ENCODE measurements at regions of chr18 and their contacts with region 1.

Region 1: DNA sequence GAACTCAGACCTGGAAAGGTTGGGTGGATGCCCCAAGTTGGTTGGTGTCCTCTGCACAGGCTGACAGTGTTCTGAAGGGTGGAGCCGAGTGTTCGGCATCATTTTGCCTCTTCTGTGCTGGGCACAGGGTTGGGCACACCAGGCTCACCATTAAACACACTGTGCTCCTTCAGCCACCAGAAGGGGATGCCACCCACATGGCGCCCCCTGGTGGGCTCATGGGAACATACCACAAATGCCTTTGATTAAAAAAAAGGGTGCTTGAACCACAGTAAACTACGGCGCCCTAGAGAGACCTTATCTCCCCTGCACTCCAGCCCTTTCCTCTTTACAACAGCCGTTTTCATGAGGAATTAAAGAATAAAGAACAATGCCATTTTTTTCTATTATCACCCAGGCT is 89.4 kb downstream of the CELF4 start:
- DNase-seq: no peak

Region 2: DNA sequence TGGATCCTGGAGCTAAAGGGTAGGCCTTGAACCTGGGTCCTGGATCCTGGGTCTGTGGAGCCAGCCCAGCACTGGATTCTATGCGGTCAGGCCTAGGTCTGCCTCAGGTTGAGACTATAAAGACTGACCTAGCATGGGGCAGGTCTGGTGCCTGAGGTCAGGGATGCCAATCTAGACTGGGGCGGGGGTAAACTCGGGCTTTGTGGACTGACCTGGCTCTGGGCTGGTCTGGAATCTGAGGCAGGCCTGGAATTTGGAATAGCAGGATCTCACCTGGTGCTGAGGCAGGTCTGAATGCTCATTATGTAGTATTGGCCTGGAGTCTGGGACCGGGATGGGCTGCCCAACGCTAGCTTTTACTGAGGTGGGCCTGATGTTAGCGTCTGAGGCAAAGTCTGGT is 391.3 kb before region 1 on chr18:
- intact Hi-C with region 1: no loop called
- DNase-seq: no peak

Region 3: DNA sequence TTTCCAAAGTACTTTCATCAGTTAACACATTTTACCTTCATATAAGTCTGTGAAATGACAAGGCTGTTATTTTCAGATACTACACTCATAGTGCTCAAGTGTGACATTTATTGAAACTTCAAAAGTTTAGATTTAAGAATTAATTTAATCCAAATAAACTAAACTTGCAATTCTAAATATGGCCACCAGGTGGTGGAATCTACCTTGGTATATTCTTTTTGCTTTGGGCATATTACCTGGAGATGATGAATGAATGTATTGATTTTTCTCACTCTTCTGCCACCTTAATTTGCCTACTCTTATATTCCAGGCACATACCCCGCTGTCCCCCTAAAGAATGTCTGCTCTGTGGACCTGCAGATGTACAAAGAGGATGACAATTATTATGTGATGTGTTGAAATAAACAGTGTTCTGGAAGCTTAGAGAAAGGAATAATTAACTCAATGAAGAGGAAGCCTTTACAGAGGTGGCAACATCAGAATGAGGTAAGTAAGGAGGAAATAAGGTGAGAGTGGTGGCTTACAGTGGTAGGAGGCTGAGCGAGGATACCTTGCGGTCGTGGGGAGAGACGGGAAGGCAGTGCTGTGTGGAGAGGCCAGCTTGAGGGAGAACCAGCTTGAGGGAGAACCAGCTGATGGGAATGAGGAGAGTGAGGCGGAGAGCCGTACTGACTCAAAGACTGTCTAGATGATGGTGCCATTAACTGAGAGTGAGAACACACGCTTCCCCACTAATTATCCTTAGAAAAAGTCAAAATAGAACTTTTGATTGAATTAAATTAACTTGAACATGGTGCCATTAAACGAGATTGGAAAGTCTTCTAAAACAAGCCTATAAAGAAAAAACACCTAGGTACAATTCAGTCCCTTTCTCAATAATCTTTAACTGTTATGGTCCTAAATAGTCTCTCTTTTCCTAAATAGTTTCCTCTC is 90.1 kb before region 1 on chr18:
- intact Hi-C with region 1: loop called (anchors 5 kb)
- DNase-seq: no peak

Region 4: DNA sequence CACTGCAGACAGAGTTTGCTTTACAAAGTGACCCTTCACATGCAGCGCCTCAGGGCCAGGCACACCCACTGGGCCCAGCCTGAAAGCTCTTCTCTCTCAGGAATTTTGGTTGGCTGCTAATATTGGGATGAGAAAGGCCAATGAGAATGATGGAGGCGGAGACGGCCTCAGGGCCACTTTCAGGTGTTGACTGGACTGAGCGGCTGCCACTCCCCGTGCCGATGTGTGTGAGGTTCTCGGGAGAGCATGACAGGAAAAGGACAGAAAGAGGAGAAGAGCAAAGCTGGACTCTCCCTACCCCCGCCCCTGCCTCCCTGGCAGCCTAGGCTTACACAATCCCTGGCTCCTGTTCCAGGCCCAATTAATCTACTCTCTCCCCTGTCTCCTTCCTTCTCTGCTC is 66.3 kb before region 1 on chr18:
- intact Hi-C with region 1: no loop called
- DNase-seq: no peak